Dendritic cell treated with granulocyte-macrophage colony-stimulating factor and Interleukin-4, amounts not matched to agents 40 ng/mL and 50 ng/mL, for 4 days (primary cell): ENCODE measurements at regions of chr14 and their contacts with region 1.

Region 1: GRCh38 chr14:68979021-68979782 is at the start of gene ACTN1:
- H3K4me3 Mint-ChIP-seq: peak within 1 kb of the TSS; percentile 86
- H3K27ac Mint-ChIP-seq: peak within 1 kb of the TSS; percentile 74
- H3K4me1 Mint-ChIP-seq: peaks cover 40% of the 10 kb centered on the region
- H3K27me3 Mint-ChIP-seq: peaks cover 18% of the 10 kb centered on the region

Region 2: DNA sequence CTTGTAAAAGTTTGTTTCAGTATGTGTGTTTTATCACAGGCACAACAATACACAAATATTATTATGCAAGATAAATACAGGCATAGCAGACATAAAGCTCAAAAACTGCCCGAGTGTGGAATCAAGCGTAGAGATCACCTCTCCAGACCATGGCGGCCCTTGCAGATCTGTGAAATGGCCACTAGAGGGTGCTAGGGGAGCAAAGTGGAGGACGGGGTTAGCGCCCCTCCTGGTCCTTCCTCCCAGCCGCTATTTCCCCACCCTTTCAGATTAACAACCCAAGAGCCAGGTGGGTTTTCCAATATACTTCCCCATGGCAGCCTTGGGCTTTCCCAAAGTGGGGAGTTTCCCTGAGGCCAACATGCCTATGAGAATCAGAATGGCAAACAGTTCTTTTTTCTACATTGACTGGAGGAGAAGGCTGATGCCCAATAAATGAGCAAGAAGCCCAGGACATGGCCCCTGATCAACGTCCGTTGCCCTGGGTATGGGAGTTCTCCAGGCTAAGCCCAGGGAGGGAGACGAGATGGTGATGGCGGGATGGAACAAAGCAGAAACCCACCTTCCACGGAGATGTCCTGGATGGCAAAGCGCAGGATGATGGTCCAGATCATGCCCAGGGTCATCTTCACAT is 67.5 kb before region 1 on chr14:
- intact Hi-C with region 1: loop called (anchors 2 kb)
- H3K4me3 Mint-ChIP-seq: no peak overlapping the region
- H3K27ac Mint-ChIP-seq: no peak overlapping the region
- H3K4me1 Mint-ChIP-seq: peaks cover 42% of the 10 kb centered on the region
- H3K27me3 Mint-ChIP-seq: no peaks in the 10 kb centered on the region

Region 3: DNA sequence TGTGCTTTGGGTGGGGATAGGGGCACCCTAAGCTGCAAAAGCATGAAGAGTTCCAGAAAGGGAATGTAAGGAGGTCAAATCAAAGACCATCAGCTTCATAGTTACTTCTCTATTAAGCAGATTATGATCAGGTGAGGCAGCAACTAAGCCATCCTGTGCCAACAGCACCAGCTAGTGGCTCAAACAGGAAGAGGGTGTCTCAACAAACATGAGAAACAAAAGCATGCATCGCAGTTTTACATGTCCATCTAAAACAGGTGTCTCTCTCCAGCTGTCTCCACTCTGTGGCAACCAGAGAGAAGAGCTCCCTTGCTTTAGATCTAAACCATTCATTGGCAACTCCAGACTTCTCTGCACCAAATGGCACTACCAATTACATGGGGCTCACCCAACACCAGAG is 53.0 kb before region 1 on chr14:
- intact Hi-C with region 1: loop called (anchors 5 kb)
- H3K4me3 Mint-ChIP-seq: no peak overlapping the region
- H3K27ac Mint-ChIP-seq: peak overlapping the region; percentile 94
- H3K4me1 Mint-ChIP-seq: peaks cover 94% of the 10 kb centered on the region
- H3K27me3 Mint-ChIP-seq: no peaks in the 10 kb centered on the region

Region 4: DNA sequence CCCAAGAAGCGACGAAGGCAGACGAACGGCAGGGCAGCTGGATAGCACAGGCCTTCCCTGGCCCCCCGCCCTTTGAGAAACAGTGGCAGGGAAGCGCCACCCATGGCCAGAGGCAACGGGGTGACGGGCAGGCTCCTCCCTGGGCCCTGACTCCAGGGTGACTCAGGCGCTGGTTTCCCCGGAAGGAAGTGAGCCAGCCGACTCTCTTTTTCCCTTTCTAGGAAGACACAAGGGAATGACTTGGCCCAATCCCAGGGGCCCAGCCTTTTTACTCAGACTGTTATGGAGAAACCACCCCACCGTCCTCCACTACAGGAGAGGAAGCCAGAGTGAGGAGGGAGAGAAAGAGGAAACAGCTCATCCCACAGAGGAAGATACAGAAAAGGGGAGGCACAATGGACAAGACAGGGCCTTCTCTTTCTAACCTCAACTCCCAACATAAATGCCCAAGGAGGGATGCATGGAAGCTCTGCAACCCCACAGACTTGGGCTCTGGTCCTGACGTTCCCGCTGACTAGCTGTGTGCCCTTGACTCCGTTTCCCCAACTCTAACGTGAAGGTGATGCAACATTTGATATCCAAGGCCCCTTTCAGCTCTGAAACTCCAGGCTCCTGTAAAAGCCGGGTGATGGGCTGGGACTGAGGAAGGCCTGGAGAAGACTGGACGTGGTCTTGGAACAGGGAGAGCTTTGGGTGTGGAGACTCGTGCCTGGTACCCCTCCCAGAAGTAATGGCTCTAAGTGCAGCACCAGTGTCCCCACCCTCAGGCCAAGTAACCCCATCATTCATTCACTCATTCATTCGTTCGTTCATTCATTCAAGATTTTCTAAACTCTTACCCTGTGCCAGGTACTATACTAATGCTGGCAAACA is 27.9 kb before region 1 on chr14:
- intact Hi-C with region 1: no loop called
- H3K4me3 Mint-ChIP-seq: peak overlapping the region; percentile 18
- H3K27ac Mint-ChIP-seq: peak overlapping the region; percentile 87
- H3K4me1 Mint-ChIP-seq: peaks cover 97% of the 10 kb centered on the region
- H3K27me3 Mint-ChIP-seq: no peaks in the 10 kb centered on the region

Region 5: DNA sequence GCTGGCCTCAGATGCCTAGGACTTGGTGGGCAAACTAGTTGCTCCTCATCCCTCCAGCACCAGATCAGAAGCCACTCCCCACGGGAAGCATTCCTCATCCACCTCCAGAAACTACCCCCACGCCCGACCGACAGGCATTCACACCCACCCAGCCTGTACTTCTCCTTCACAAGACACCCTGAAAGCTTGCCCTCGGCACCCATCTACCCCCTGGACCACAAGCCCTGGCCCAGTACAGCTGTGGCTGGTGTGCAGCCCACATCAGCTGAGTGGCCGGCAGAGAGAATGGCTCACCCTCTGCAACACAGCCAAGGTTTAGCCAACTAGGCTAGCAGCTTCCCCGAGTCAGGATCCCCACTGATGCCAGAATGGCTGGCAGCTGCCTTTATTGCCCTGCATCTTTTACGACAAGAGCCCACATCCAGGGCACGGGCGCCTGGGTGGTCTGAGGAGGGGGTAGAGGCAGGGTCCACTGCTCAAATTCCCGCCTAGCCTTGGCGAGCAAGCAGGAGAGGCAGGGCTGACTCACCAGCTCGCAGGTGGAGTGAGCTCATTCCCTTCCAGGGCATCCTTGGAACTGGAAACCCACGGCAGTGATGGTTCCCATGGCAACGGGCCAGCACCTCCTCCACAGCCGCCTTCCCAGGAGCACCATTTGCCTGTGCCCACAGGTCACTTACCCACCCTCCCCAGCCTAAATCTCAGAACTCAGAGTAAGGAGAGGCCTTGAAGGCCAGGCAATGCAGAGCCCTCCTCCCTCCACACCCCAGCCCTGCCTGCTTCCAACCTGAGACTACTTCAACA is 17.2 kb before region 1 on chr14:
- intact Hi-C with region 1: no loop called
- H3K4me3 Mint-ChIP-seq: no peak overlapping the region
- H3K27ac Mint-ChIP-seq: peak overlapping the region; percentile 72
- H3K4me1 Mint-ChIP-seq: peaks cover 90% of the 10 kb centered on the region
- H3K27me3 Mint-ChIP-seq: no peaks in the 10 kb centered on the region

Region 6: DNA sequence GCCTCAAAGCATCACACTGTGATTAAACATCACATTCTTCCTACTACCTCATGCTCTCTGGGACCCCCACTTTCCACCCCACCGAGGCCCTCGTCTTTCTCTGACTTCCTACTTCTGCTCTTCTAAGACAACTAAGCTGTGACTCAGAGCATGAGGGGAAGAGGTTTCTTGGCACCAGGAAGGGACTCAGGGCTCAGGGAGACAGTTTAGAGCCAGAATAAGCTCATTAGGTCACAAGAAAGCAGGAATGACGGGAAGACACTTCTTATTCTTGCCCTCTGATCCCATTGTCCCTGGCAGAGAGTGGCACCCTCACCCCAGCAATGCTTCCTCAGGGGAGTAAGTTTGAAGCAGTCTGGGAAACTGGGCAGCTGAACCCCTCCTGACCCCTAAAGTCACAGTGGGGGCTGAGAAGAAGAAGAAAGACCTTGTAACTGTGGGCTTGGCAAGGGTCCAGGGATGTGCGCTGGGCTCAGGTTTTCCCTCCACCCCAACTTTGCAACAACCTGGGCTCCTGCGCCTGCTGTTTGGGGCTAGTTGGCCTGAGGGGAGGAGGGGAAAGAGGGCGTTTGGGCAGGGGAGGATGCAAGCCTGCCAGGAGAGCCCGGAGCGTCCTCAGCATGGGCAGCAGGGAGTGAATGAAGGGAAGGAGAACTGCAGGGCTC is 64.5 kb after region 1 on chr14:
- intact Hi-C with region 1: loop called (anchors 5 kb)
- H3K4me3 Mint-ChIP-seq: peak overlapping the region; percentile 46
- H3K27ac Mint-ChIP-seq: peak overlapping the region; percentile 95
- H3K4me1 Mint-ChIP-seq: peaks cover 89% of the 10 kb centered on the region
- H3K27me3 Mint-ChIP-seq: peaks cover 3% of the 10 kb centered on the region

Region 7: GRCh38 chr14:69153131-69153872 is 174.1 kb after region 1 on chr14:
- intact Hi-C with region 1: loop called (anchors 2 kb)
- H3K4me3 Mint-ChIP-seq: peak overlapping the region; percentile 92
- H3K27ac Mint-ChIP-seq: peak overlapping the region; percentile 96
- H3K4me1 Mint-ChIP-seq: peaks cover 35% of the 10 kb centered on the region
- H3K27me3 Mint-ChIP-seq: peaks cover 12% of the 10 kb centered on the region